ENCODE measurements at regions of chr1 and their contacts with region 1.

Region 1: DNA sequence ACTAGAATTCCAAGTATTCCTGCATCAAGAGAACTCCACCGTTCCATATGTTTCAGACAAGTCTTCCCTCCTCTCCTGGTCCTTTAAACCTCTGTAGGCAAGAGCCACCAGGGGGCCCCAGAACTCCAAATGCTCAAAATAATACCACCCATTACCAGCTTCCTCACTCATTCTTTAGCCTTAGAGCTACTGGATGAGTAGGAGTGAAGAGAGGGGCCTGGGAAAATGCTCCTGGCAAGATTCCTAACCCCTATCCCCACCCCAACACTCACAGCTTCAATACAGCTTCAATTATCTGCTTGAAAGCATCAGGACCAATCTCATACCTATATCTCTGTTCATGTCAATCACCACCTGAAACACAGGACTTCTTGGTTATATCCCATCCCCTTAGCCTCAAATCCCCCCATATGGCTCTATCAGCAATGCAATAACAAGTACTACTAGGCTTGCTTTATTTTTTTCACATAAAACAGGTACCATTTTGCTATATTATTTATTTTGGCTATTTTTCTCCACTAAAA is 9.7 kb downstream of the TOR1AIP2 start:
- DNase-seq: peak; percentile 71
- H3K4me3 Mint-ChIP-seq: no peak overlapping the region
- H3K27ac Mint-ChIP-seq: no peak overlapping the region
- H3K4me1 Mint-ChIP-seq: peaks cover 13% of the 10 kb centered on the region
- H3K27me3 Mint-ChIP-seq: no peaks in the 10 kb centered on the region

Region 2: GRCh38 chr1:179954493-179955297 is 86.8 kb after region 1 on chr1 and contains the start of gene CEP350:
- CTCF ChIA-PET with region 1: interaction called, 4 read pairs
- intact Hi-C with region 1: loop called (anchors 1 kb)
- DNase-seq: peak; percentile 99
- H3K4me3 Mint-ChIP-seq: peak within 1 kb of the TSS; percentile 85
- H3K27ac Mint-ChIP-seq: peak within 1 kb of the TSS; percentile 95
- H3K4me1 Mint-ChIP-seq: peaks cover 41% of the 10 kb centered on the region
- H3K27me3 Mint-ChIP-seq: no peaks in the 10 kb centered on the region
- total RNA-seq, gene CEP350: 30.3 to 36.0 TPM

Region 3: DNA sequence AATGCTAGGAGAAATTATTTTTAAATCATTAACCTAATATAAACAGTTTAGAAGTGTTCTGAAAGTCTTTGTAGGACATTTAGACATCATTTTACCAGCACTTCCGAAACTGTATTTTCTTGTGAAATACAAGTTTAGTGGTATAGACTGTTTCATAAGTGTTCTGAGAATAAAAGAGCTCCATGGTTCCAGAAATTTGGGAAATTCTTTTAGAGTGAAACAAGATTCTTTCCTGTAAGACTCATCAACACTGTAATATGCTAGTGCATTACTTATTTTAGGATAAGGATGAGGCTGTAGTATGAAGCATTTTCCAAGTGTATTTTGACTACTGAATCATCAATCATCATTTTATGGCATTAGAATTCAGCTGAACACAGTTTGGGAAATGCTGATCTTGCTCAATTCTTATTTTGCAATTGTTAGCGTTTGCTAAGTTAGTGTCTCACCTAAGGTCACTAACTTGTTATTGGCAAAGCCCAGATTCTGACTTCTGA is 160.1 kb after region 1 on chr1:
- CTCF ChIA-PET with region 1: no interaction called
- intact Hi-C with region 1: loop called (anchors 5 kb)
- DNase-seq: no peak
- H3K4me3 Mint-ChIP-seq: no peak overlapping the region
- H3K27ac Mint-ChIP-seq: no peak overlapping the region
- H3K4me1 Mint-ChIP-seq: peaks cover 3% of the 10 kb centered on the region
- H3K27me3 Mint-ChIP-seq: no peaks in the 10 kb centered on the region

Region 4: GRCh38 chr1:180040034-180040433 is 172.2 kb after region 1 on chr1:
- CTCF ChIA-PET with region 1: no interaction called
- intact Hi-C with region 1: loop called (anchors 5 kb)
- DNase-seq: no peak
- H3K4me3 Mint-ChIP-seq: no peak overlapping the region
- H3K27ac Mint-ChIP-seq: no peak overlapping the region
- H3K4me1 Mint-ChIP-seq: no peaks in the 10 kb centered on the region
- H3K27me3 Mint-ChIP-seq: no peaks in the 10 kb centered on the region

Region 5: DNA sequence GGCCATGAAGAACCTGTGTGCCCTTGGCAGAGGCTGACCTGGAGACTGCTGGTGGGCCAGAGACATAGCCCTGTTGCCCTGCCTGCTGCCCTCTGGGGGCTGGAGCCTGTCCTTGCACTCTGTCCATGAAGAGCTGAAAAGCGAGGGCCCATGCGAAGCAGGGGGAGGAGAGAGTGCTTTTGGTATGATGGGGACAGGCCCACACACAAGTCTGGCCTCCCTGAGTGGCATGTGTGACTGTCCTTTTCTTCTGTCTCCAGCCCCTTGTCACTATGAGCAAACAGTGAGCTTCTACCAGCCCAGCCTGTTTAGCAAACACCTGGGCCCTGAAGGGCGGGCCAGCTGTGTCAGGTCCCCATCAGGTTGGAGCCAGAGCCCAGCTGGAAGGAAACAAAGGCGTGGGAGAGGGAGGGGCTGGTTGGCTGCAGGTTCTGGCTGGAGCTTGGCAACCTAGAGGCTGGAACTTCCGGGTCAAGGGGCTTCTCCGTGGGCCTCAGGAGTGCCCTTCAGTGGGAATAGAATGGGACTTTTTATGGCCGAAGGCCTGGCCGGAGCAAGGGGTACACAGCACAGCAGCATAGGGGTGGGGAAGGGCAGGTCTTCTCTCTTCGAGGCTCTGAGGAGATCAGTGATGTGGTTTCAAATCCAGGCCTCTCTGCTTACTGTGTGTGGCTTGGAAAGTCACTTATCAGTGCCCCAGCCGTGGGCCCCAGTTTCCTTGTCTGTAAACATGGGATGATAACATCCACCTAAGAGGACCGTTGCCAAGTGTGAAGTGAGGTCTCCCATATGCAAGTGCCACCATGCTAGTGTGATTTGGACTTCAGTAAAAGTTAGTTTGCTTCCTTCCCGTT is 301.1 kb after region 1 on chr1:
- CTCF ChIA-PET with region 1: interaction called, 4 read pairs
- intact Hi-C with region 1: loop called (anchors 1 kb)
- DNase-seq: peak; percentile 56
- H3K4me3 Mint-ChIP-seq: no peak overlapping the region
- H3K27ac Mint-ChIP-seq: no peak overlapping the region
- H3K4me1 Mint-ChIP-seq: no peaks in the 10 kb centered on the region
- H3K27me3 Mint-ChIP-seq: no peaks in the 10 kb centered on the region